Sciatic nerve (tissue), 2 donors: ENCODE measurements at regions of chr7 and their contacts with region 1.

Region 1: DNA sequence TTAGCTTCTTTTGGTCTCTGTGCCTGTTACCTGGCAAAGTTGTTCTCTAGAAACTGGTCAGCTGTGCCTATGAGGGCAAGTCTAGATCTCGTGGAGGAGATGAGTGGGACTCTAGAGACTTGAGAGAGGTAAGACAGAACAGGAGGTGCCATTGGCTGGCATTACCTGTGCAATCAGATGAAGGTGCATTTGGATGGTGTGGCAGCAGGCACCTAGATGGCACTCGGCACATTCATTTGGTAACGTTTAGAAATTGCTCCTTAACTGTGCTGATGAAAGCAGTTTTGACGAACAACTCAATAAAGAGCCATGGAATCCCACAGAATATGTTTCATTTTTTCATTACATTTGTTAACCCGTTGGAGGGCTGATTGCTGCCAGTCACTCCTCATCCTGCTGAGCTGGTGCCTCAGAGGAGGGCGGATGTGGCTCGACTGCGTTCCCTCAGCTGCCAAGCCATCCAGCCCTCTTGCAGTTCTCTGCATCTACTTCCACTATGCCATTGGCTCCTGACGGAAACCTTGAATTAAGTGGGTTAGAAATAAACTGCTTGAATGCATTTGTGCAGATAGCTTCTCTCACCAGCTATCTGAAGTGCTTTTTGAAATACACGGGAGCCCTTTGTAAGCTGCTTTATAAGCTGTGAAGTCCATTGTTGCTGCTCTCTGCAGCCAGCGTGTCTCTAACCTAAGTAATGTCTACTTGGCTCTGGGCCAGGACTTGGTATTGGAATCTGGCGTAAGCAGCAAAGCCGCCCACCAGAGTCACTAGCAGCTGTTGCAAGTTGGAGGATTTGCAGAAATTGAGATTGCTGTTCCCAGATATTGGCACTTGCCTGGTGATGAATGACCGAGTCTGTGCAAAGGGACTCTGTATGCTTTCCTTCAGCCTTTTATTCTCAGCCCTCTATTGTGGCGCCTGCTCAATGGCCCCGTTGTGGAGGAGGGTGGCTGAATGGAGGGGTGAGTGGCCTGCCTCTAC is 87.4 kb downstream of the LRRC4 start:
- DNase-seq: peak; percentile 65
- ATAC-seq: peak; percentile 55

Region 2: GRCh38 chr7:127081539-127081938 is 862.3 kb before region 1 on chr7:
- intact Hi-C with region 1: no loop called
- DNase-seq: no peak
- ATAC-seq: no peak

Region 3: DNA sequence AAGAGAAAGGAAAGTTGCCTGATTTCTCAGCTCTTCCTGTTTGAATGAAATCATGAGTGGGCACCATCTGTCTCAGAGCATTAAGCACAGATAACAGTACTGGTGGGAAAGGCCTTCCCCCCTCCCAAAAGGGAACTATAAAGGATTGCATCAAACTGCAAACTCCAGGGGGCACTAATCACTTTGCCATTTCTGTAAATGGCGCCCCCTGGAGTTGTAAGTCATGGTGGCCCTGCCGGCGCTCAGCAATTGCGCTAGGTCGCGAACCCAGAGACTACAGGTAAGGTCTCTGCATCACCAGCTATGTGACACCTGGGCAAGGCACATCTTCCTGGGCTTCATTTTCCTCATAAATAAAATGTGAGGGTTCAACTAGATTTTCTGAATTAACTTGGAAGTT is 76.3 kb after region 1 on chr7:
- intact Hi-C with region 1: loop called (anchors 10 kb)
- DNase-seq: no peak
- ATAC-seq: no peak